ENCODE measurements at regions of chr14 and their contacts with region 1.

Region 1: DNA sequence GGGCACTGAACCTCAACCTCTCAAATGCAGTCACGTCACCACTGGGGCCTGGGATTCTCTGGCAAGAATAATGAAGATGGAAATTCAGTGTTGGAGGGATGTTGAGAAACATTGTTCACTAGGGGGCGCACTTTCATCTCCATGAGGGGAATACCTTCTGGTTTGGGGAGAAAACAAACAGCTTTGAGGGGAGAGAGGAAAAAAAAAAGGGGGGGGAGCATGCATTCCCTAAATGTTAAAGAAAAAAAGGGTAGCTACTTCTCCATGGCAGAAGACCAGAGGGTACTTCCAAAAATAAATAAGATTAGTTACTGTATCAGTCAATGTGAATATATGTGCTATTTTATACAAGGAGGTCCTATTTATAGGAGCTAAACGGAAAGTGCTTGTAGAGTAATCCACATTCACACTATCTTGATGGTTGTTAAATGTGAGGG is 5.8 kb upstream of the TBPL2 start:
- H3K4me3 ChIP-seq: no peak overlapping the region
- H3K27ac ChIP-seq: no peak overlapping the region
- H3K4me1 ChIP-seq: peaks cover 18% of the 10 kb centered on the region
- CTCF ChIP-seq: peak; percentile 58

Region 2: DNA sequence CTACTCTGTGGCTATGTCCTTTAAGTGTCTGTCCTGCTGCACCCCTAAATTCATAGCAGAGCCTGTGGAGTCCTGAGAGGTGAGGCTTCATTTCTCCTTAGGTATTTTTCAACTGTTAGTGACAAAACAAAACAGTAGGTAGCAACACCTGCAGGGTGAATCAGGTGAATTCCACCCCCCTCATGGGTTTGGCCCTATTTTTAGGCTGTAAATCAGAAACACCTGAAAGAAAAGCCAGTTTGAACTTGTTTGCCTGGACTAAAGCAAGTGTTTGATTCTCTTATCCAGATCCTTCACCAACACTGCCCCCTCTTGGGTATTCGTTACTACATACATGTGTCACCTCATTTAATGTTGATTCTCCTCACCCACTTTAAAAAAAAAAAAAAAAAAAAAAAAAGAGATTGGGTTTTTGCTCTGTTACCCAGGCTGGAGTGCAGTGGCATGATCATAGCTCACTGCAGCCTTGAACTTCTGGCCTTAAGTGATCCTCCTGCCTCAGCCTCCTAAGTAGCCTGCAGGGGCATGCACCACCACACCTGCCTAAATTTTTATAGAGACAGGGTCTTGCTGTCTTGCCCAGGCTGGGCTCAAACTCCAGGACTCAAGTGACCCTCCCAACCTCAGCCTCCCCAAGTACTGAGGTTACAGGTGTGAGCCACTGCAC is 16.1 kb before region 1 on chr14:
- CTCF ChIA-PET with region 1: interaction called, 22 read pairs
- POLR2A ChIA-PET with region 1: no interaction called
- H3K4me3 ChIP-seq: no peak overlapping the region
- H3K27ac ChIP-seq: no peak overlapping the region
- H3K4me1 ChIP-seq: no peaks in the 10 kb centered on the region
- CTCF ChIP-seq: no peak

Region 3: DNA sequence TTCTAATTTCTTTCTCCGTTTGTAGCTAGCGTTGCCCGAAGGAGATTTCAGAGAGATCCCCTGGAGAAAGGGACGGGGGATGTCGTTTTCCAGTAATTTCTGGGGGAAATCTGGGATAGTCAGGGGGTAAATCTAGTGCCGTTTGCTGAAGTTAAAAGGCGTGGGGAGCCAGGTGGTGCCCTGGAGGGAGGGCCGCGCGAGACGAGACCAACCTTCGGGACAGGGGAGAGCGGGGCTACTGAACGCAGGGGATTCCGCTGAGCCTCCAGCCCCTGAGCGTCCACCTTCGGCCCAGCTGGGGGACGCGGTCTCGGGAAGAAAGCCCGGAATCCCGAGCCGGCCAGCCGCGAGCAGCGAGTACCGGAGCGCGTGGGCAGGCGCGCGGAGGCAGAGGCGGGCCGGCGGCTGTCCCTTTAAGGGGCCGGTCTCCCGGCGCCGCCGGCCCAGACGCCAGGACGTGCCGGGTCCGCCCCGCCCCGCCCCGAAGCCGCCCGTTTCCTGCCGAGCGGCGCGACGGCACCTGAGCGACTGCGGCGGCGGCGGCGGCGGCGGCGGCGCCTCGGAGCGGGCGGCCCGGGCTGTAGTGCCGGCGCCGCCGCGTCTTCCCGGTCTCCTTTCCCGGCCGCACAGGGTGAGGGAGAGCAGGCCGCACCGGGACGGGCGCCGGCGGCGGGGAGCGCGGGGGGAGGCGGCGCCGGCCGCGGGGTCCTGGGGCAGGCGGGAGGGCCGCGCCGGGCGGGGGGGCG is 133.7 kb after region 1 on chr14 and contains the start of gene KTN1:
- CTCF ChIA-PET with region 1: interaction called, 13 read pairs
- POLR2A ChIA-PET with region 1: no interaction called
- H3K4me3 ChIP-seq: peak within 1 kb of the TSS; percentile 95
- H3K27ac ChIP-seq: peak within 1 kb of the TSS; percentile 85
- H3K4me1 ChIP-seq: peaks cover 26% of the 10 kb centered on the region
- CTCF ChIP-seq: no peak

Region 4: DNA sequence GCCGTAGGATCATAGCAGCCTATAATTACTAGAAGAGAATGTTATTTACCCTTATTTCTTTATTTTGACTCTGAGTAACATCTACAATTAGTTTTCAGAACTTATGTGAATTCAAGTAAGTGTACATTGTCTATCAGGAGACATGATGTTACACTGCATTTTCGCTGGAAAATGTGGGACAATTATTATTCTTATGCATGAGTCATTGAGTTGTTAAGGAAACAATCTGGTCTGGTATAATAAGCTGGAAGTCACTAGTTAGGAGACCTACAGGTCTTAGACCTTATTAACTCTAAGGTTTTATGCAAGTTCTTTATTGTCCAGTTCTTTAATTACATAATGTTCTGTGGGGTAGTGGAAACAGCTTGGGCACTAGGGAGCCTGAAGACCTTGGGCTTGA is 139.6 kb after region 1 on chr14:
- CTCF ChIA-PET with region 1: interaction called, 13 read pairs
- POLR2A ChIA-PET with region 1: no interaction called
- H3K4me3 ChIP-seq: no peak overlapping the region
- H3K27ac ChIP-seq: no peak overlapping the region
- H3K4me1 ChIP-seq: peaks cover 58% of the 10 kb centered on the region
- CTCF ChIP-seq: no peak

Region 5: DNA sequence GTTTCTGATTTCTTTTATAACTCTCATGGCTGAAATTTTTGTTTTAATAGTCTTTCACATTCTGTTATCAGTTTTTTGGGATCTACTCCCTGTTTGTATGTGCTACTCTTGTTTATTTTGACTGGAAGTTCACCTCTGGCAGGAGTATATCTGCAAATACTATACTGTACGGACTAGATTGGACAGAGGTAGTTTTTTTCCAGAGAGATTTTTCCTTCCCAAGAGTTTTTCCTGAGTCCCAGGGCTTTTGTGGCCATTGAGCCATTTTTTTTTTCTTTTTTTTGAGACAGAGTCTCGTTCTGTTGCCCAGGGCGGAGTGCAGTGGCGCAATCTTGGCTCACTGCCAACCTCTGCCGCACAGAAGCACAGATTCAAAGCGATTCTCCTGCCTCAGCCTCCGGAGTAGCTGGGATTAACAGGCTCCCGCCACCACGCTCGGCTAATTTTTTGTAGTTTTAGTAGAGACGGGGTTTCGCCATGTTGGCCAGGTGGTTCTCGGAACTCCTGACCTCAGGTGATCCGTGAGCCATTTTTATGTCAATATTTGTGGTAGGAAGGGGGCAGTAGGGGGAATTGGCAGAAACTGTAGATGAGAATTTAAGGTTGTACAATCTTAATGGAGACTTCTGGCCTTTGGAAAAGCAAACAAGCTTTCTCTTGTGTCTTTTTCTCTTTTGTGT is 153.1 kb after region 1 on chr14:
- CTCF ChIA-PET with region 1: interaction called, 20 read pairs
- POLR2A ChIA-PET with region 1: no interaction called
- H3K4me3 ChIP-seq: no peak overlapping the region
- H3K27ac ChIP-seq: peak overlapping the region; percentile 70
- H3K4me1 ChIP-seq: peaks cover 26% of the 10 kb centered on the region
- CTCF ChIP-seq: no peak

Measured in HEK293 (cell line).